Activated B cell treated with CpG ODN at 0.5 μM for 24 hours (primary cell): ENCODE measurements at regions of chr20 and their contacts with region 1.

Region 1: DNA sequence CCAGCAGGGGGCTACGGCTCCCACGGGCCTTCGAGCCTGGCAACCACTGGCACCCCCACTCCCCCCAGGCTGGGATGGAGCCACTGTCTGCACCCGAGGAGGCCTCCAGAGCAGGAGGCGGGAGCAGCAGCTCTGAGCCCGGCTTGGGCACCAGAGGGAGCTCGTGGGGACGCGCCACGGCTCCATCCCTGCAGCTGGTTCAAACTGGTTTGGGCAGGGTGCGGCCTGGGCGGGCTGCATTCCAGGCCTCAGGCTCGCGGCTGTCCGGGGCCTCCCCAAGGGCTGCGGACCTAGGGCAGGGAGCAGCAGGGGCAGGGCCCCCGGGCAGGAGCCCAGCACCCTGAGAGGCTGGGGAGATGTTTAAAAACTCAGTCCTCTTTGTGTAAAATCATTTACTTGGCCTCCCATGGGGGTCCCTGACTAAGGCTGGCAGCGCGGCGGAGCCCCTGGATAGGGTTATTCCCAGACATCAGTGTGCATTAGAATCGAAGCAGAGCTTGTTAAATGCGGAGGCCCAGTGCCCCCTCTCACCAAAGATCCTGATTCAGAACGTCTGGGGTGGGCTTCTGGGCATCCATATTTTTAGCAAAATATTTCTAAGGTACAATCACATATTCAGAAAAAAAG is 4.1 kb upstream of the BCAS4 start:
- DNase-seq: peak; percentile 78
- ATAC-seq: peak; percentile 67
- H3K4me3 Mint-ChIP-seq: peak overlapping the region; percentile 52
- H3K27ac Mint-ChIP-seq: peak overlapping the region; percentile 87
- H3K4me1 Mint-ChIP-seq: peaks cover 23% of the 10 kb centered on the region
- H3K27me3 Mint-ChIP-seq: no peaks in the 10 kb centered on the region
- CTCF ChIP-seq: no peak

Region 2: DNA sequence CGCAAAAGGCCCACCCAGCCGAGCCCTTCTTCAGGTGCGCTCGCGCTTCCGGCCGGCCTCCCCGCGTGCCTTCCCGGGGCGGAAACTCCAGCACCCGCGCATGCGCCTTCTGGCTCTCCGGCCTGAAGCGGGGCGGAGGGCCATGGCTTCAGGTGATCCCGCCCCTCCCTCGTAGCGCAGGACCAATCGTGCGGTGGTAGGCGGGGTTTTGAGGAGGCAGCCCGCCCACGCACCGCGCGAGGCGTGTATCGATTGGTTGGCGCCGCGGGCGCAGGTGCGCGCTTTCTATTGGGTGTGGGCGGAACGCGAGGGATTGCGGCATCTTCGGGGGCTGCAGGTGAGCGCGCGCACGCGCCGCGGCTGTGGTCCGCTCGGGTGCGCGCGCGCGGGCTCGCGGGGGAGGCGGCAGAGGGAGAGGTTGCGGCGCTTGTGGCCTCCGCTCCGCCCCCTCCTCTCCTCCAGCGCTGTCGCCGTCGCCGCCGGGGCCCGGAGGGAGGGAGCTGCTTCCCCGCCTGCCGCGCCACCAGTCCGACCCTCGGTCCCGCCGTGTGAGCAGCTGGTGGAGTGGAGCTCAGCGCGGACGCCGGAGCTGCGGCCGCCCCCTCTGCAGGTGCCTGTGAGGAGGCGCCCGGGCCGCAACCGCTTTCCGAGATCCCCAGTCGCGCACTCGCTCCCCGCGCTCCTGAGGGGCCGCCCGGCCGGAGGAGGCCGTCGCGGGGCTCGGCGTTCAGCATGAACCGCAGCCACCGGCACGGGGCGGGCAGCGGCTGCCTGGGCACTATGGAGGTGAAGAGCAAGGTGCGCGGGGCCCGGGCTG is 59.5 kb before region 1 on chr20 and contains the start of gene PARD6B:
- CTCF ChIA-PET with region 1: no interaction called
- POLR2A ChIA-PET with region 1: interaction called, 4 read pairs
- intact Hi-C with region 1: loop called (anchors 1 kb)
- DNase-seq: peak; percentile 98
- ATAC-seq: peak; percentile 94
- H3K4me3 Mint-ChIP-seq: peak within 1 kb of the TSS; percentile 89
- H3K27ac Mint-ChIP-seq: peak within 1 kb of the TSS; percentile 71
- H3K4me1 Mint-ChIP-seq: peaks cover 16% of the 10 kb centered on the region
- H3K27me3 Mint-ChIP-seq: peaks cover 2% of the 10 kb centered on the region
- CTCF ChIP-seq: no peak
- total RNA-seq, gene PARD6B: 3.8 and 5.7 TPM in 2 replicates

Region 3: GRCh38 chr20:50824193-50824632 is 33.4 kb after region 1 on chr20:
- CTCF ChIA-PET with region 1: interaction called, 145 read pairs
- POLR2A ChIA-PET with region 1: interaction called, 233 read pairs
- intact Hi-C with region 1: no loop called
- DNase-seq: no peak
- ATAC-seq: no peak
- H3K4me3 Mint-ChIP-seq: no peak overlapping the region
- H3K27ac Mint-ChIP-seq: peak overlapping the region; percentile 71
- H3K4me1 Mint-ChIP-seq: peaks cover 55% of the 10 kb centered on the region
- H3K27me3 Mint-ChIP-seq: no peaks in the 10 kb centered on the region
- CTCF ChIP-seq: no peak

Region 4: DNA sequence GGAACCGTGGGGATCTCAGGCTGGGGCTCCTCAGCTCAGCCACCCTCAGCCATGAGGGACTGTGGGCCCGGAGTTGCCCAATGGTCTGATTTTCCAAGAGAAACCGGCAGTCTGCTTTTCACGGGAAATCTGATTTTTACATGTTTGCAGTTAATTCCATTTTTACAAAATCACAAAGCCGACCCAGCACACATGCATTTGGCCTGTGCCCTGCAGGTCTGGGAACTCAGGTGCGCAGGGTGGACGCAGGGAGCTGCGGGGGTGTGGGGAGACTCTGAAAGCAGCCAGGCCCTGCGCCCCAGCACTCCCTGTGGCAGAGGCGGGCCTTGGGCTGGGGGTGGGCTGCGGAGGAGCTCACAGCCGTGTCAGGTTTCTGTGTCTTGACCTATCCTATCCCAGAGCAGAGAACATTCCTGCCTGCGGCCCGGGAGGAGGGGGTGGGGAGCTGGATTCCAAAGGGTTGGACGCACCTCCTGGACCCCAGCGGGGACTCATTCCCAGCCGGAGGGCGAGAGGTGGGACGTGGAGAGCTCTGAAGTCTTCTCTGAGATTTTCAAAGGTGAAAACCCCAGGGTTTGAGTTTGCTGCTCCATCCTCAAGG is 79.9 kb after region 1 on chr20:
- CTCF ChIA-PET with region 1: interaction called, 6 read pairs
- POLR2A ChIA-PET with region 1: interaction called, 3 read pairs
- intact Hi-C with region 1: loop called (anchors 5 kb)
- DNase-seq: no peak
- ATAC-seq: no peak
- H3K4me3 Mint-ChIP-seq: no peak overlapping the region
- H3K27ac Mint-ChIP-seq: no peak overlapping the region
- H3K4me1 Mint-ChIP-seq: peaks cover 19% of the 10 kb centered on the region
- H3K27me3 Mint-ChIP-seq: no peaks in the 10 kb centered on the region
- CTCF ChIP-seq: no peak

Region 5: DNA sequence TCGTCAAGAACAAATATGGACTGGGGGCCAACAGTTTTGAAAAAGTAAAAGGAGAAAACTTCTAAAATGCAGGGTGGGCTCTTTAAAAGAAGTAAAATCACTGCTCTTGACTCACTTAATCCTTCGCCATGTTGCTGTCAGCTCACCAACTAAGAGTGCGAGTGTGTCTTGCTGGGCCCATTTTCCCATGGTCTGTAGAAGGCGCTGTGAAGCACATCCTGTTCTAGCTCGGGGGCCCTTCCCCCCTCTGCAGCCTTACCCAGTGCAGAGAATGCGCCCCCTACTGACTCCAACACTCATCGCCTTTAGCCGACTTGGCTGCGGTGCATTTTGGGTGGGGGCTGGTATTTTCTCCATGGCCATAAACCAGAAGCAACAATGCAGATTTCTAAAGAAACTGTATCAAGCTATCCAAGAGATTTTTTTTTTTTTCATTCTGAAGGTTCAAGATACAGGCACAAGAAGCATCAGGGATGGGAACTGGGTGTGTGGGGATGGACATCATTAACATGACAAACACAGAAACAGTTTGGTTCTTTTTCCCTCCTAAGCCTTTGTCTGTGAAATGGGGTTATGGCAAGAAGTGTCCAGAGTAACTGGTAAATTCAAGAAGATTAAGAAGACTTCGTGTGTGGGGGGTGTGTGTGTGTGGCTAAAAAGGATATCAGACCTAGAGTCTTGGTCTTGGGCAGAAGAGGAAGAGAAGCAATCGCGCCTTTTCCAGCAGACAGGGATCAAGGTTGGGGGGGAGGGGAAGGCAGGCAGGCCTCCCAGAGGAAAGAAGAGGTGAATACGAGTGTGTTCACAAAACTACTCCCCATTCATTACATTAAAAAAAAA is 138.8 kb after region 1 on chr20:
- CTCF ChIA-PET with region 1: interaction called, 231 read pairs
- POLR2A ChIA-PET with region 1: interaction called, 364 read pairs
- intact Hi-C with region 1: loop called (anchors 1 kb)
- DNase-seq: peak; percentile 74
- ATAC-seq: peak; percentile 66
- H3K4me3 Mint-ChIP-seq: peak overlapping the region; percentile 85
- H3K27ac Mint-ChIP-seq: peak overlapping the region; percentile 92
- H3K4me1 Mint-ChIP-seq: peaks cover 52% of the 10 kb centered on the region
- H3K27me3 Mint-ChIP-seq: no peaks in the 10 kb centered on the region
- CTCF ChIP-seq: no peak

Region 6: DNA sequence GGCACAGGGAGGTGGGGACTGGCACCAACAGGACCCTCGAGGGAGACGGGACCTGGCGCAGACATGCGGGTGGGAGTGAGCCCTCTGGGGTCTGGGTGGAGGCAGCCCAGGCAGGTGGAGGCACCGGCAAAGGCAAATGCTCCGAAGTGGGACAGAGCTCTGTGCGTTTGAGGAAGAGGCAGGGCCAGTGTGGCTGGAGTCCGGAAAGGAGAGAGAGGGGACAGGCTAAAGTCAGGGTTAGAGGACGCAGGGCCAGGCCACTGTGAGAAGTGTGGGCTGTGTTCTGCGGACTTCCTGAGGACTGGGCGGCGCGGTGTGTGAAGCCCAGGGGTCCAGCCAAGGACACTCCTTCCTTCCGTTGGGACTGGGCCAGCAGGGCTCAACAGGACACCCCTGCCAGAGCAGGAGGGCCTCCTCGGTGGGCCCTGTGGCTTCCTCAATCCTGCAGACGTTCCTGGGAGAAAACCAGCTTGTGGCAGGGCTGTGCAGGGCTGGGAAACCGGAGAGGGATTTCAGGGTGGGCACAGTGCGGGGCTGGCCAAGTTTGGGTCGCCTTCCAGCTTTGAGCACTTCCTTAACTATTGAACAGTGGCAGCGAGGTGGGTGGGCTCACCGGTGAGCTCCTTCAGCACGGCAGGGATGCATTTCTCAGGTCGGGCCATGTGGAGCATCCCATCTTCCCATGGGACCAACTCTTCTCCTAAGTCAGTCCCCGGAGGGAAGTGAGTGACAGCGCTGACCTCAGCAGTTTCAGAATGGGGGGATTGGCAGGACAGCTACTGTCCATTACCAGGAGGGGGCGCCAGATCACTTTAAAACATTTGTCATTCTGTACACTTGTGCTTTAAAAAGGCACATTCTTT is 190.3 kb after region 1 on chr20:
- CTCF ChIA-PET with region 1: interaction called, 31 read pairs
- POLR2A ChIA-PET with region 1: interaction called, 8 read pairs
- intact Hi-C with region 1: loop called (anchors 1 kb)
- DNase-seq: peak; percentile 37
- ATAC-seq: peak; percentile 84
- H3K4me3 Mint-ChIP-seq: no peak overlapping the region
- H3K27ac Mint-ChIP-seq: no peak overlapping the region
- H3K4me1 Mint-ChIP-seq: peaks cover 3% of the 10 kb centered on the region
- H3K27me3 Mint-ChIP-seq: peaks cover 31% of the 10 kb centered on the region
- CTCF ChIP-seq: peak; percentile 89

Region 7: DNA sequence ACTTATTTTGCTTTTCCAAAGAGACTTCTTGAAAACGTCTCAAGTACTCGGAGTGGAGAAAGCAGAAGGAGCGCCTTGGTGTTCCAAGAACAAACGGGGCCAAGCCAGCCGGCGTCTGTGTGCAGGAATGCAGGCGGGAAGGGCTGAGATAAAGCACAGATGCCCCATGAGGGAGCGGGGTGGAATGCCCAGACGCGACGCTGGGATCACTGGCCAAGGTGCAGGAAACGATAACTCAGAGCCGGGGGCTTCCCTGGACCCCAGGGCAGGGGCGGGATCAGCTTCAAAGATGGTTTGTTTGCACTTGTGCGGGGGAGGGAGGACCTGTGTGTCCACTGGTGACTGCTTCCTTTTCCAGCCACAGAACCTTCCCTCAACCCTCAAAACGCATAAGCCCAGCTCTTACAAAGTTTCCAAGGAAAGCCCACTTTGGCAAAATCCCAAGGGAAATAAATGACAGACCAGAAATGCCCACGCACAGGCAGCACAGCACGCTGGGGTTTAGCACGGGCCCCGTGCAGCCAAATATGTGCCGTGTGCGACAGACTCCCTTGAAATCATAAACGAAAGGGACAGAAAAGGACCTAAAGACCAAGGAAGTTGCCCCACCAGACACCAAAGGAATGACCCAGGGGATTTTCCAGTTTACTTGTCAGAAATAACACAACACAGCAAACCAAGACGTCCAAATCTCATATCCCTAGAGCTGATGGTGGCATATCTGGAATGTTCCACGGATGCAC is 637.8 kb after region 1 on chr20:
- CTCF ChIA-PET with region 1: no interaction called
- POLR2A ChIA-PET with region 1: no interaction called
- intact Hi-C with region 1: no loop called
- DNase-seq: no peak
- ATAC-seq: no peak
- H3K4me3 Mint-ChIP-seq: no peak overlapping the region
- H3K27ac Mint-ChIP-seq: no peak overlapping the region
- H3K4me1 Mint-ChIP-seq: peaks cover 51% of the 10 kb centered on the region
- H3K27me3 Mint-ChIP-seq: no peaks in the 10 kb centered on the region
- CTCF ChIP-seq: no peak